ENCODE measurements at regions of chrX and their contacts with region 1.

Region 1: DNA sequence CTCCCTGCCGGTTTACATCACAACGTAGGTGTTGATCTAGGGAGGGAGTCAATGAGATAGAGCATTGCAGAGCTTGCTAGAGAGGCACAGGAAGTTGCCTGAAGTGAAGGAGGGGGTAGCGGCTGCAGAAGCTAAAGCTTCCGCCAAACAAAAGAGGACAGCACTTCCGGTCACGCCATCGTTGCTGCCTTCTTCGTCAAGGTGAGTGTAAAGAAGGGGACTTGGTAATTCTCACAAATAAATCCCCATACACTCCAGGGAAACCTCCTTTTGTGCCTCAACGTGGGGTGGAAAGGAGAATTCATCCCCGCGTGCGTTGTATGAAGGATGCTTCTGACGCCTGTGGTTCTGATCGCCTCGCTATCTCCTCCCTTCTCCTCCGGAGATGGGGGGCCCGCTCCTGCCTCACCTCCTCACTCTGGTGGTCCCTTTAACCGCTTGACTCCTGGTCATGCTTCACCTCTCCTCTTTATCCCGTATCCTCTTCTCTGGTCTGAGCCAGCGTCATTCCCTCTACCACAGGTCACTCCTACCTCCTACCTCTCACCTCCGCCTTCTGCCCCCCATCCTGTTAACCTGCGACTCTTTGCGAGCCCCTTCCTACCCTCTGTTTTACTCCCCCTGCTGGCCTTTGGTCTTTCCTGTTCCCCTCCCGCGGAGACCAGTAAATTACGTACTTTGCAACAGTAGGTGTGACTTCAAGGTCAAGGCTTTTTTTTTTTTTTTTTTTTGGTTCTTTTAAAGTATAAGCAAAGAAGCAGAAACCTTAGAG is 59.9 kb downstream of the GSPT2 start:
- DNase-seq: peak; percentile 83
- H3K4me3 ChIP-seq: peak overlapping the region; percentile 82
- H3K27ac ChIP-seq: peak overlapping the region; percentile 81
- H3K4me1 ChIP-seq: peaks cover 41% of the 10 kb centered on the region
- CTCF ChIP-seq: peak; percentile 65

Region 2: GRCh38 chrX:51169410-51169809 is 633.7 kb before region 1 on chrX:
- CTCF ChIA-PET with region 1: no interaction called
- POLR2A ChIA-PET with region 1: no interaction called
- intact Hi-C with region 1: no loop called
- DNase-seq: no peak
- H3K4me3 ChIP-seq: no peak overlapping the region
- H3K27ac ChIP-seq: no peak overlapping the region
- H3K4me1 ChIP-seq: no peaks in the 10 kb centered on the region
- CTCF ChIP-seq: no peak

Region 3: DNA sequence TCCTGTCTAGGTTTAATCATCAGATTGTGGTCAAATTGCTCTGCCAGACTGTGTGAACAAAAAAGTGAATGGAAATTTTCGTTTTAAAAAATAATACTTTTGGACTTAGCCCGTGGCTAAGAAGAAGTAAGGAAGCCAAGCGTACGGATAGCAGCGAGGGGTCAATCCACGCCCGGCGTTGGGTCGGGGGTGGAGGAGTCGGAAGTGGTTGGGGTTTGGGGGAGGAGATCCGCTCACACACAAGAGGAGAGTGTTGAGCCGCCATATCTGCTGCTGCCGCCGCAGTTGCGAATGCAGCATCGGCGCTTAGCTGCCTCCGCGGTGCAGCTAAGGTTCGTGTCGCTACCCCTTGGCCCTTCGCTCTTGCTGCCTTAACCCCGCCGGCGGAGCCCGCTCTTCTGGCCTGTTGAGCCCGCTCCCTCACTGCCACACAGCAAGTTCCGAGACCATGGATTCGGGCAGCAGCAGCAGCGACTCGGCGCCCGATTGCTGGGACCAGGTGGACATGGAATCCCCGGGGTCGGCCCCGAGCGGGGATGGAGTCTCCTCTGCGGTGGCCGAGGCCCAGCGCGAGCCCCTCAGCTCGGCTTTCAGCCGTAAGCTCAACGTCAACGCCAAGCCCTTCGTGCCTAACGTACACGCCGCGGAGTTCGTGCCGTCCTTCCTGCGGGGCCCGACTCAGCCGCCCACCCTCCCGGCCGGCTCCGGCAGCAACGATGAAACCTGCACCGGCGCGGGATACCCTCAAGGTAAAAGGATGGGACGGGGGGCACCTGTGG is 59.7 kb before region 1 on chrX and contains the start of gene GSPT2:
- CTCF ChIA-PET with region 1: no interaction called
- POLR2A ChIA-PET with region 1: interaction called, 3 read pairs
- intact Hi-C with region 1: loop called (anchors 2 kb)
- DNase-seq: peak; percentile 72
- H3K4me3 ChIP-seq: peak within 1 kb of the TSS; percentile 88
- H3K27ac ChIP-seq: peak within 1 kb of the TSS; percentile 69
- H3K4me1 ChIP-seq: peaks cover 30% of the 10 kb centered on the region
- CTCF ChIP-seq: no peak
- total RNA-seq, gene GSPT2: 6.6 and 6.8 TPM in 2 replicates

Measured in OCI-LY7 (cell line).